Calu3 (cell line): ENCODE measurements at regions of chr14 and their contacts with region 1.

Region 1: DNA sequence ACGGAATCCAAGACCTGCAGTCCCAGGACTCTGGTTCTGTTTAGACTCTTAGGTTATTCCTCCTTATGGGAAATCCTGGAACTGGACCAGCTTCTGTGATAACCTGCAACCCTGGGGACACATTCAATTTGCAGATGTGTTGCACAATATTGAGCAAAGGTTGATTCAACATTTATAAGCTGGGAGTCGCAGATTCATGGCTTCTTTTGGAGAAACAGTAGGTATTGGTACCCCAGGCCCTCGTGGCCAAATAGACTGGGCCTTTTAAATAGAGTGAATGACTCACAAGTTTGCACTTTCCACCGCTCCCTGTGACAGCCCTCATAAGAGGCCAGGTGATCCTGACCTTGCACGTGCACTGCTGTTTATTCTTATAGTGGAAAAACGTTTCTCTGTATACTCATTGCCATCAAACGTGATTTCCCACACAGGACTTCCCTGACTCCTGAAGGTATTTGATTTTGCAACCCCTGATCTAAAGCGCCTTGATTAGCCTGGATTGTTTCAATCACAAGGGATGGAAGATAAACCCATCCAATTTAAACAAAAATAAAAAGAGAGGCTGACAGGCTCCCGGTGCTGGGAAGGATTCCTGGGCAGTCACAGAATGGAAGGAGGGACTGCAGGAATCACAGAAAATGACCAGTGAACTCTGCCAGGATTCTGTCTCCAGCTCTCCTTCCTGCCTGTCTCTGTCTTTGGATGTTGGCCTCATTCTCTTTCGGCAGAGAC is 98.0 kb downstream of the VCPKMT start:
- DNase-seq: peak; percentile 65
- H3K4me3 Mint-ChIP-seq: no peak overlapping the region
- H3K27ac Mint-ChIP-seq: peak overlapping the region; percentile 78
- H3K4me1 Mint-ChIP-seq: peaks cover 55% of the 10 kb centered on the region
- H3K27me3 Mint-ChIP-seq: no peaks in the 10 kb centered on the region
- CTCF ChIP-seq: no peak

Region 2: DNA sequence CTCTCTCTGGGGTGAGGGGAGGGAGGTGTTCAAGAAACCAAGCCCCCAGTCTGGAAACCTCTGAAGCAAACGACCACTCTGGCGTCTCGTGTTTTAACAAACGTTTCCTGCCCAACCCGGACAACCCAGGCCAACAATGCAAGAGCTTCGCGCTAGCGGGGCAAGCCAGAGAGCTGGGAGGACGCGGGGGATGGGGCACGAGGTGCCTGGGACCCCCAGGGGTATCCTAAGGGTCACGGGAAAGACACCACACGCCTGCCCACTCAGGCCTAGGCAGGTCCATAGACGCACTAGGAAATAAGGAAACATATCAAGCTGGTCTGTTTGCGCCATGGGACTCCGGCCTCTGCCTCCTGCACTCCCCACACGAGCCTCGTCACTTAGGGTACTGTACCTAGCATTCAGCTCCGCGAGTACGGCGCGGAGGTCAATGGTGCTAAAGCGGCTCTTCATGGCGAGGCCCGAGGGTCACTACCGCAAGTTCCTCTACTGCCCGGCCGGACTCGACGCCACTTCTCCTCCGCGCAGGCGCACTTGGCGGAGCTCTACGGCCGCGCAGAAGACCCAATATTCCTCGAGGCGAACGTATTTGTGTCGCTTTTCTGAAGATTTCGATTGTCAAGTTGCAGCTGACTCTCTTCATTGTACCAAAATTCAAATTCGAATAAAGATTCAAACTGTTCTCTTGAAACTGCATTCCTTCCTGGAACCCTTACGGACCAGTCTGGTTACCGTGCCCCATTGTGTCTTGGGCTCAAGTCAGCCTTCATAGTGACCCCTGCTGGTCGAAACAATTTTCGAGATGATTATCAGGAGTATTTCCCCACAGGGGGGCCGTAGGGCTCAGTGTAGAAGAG is 165.8 kb before region 1 on chr14 and contains the start of gene NEMF:
- CTCF ChIA-PET with region 1: interaction called, 11 read pairs
- intact Hi-C with region 1: no loop called
- DNase-seq: peak; percentile 86
- H3K4me3 Mint-ChIP-seq: peak within 1 kb of the TSS; percentile 96
- H3K27ac Mint-ChIP-seq: peak within 1 kb of the TSS; percentile 97
- H3K4me1 Mint-ChIP-seq: peaks cover 25% of the 10 kb centered on the region
- H3K27me3 Mint-ChIP-seq: no peaks in the 10 kb centered on the region
- CTCF ChIP-seq: peak; percentile 84
- total RNA-seq, gene NEMF: 76.3 and 77.7 TPM in 2 replicates